ENCODE measurements at regions of chr1 and their contacts with region 1.

Region 1: GRCh38 chr1:203475012-203475981 is at the start of gene PRELP:
- DNase-seq: no peak
- total RNA-seq, gene PRELP: 172 to 283 TPM

Region 2: DNA sequence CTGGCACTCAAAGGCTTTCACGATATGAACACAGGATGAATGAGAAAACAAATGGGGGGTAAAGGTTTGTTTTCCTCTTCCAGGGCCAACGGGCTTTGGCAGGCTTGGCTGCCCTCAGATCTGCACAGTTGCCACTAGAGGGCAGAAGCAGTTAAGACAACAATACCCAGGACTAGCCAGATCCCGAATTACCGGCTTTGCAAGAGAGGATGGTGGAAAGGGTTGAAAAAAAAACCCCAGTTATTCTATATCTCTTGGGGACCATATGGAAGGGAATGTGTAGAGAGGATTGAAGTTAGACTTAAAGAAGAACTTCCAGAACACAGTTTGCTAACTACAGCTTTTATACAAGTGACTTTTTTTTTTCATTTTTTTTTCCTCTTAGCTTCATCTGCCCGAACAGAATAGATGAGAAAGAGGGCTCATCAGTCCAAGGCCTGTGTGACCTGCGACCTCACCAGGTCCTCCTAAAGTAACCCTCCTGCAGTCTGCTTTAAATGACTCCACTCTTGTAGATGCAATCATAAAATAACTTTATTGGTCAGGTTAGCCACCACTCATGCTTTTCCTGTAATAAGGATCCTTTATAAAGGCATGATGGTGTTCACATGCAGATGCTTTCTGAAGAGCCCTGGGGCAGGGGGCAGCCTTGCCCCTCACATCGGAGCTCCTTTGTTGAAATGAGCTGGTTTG is 135.0 kb before region 1 on chr1:
- intact Hi-C with region 1: loop called in 1 of 2 experiments (anchors 2 kb)
- DNase-seq: no peak

Region 3: GRCh38 chr1:205056188-205056611 is 1580.9 kb after region 1 on chr1:
- intact Hi-C with region 1: loop called in 1 of 2 experiments (anchors 5 kb)
- DNase-seq: no peak

Measured in posterior vena cava (tissue), 2 donors.